ENCODE measurements at regions of chr6 and their contacts with region 1.

Region 1: DNA sequence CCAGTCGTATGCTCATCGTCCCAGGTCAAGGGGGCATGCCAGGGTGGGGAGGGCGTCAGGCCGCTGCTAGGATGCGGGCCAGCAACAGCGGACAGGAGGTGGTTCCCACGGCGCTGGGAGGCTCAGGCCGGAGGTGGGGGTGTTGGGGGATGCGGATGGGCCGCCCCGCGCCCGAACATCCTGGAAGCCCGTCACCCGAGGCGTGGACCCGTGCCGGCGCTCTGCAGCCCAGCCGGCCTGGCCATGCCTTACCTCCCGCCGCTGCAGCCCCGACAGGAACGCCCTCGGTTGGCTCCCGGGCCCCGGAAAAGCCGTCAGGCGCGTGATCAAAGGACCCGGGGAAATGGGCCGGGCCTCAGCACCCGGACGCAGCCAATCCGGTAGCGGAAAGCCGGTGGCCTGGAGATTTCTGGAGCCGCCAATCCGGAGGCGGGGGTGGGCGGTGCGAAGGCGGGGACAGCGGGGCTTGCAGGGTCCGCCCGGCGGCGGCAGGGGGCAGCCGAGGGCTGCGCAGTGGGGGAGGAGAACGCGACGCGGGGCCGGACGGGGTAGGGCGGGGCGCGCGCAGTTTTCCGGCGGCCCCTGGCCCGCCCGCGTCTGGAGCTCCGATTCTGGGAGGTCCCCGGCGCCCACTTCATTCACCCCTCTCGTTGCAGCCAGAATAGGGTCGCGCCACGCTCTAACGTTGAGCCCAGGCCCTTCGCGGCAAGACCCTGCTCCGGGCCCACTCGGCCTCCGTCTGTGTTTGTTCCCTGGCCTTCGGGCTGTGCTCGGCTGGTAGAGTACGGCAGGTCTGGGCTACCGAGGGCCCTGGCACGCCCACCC is at the start of gene SMIM29:
- DNase-seq: peak; percentile 99
- total RNA-seq, gene SMIM29: 27.1 TPM

Region 2: DNA sequence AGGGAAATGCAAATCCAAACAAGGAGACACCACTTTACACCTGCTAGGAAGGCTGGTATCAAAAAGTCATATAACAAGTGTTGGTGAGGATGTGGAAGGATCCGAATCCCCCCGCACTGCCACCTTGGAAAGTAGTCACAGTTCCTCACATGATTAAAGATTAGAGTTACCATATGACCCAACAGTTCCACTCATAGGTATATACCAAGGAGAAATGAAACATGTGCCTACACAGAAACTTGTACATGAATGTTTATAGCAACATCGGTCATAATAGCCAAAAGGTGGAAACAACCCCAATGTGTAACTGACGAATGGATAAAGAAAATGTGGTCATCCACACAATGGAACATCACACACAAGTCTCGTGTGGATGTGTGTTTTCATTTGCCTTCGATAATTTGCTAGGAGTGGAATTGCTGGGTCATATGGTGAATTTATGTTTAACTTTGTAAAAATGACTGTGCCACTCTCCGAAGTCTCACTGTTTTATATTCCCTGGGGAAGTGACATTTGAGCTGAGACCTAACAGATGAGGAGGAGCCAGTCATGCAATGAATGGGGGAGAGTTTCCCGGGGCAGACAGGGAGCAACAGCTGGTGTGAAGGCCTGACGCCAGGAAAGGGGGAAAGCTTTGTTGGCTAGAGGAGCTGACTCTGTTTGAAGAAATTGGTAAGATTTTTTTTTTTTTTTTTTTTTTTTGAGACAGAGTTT is 319.2 kb before region 1 on chr6:
- intact Hi-C with region 1: no loop called
- DNase-seq: no peak

Region 3: DNA sequence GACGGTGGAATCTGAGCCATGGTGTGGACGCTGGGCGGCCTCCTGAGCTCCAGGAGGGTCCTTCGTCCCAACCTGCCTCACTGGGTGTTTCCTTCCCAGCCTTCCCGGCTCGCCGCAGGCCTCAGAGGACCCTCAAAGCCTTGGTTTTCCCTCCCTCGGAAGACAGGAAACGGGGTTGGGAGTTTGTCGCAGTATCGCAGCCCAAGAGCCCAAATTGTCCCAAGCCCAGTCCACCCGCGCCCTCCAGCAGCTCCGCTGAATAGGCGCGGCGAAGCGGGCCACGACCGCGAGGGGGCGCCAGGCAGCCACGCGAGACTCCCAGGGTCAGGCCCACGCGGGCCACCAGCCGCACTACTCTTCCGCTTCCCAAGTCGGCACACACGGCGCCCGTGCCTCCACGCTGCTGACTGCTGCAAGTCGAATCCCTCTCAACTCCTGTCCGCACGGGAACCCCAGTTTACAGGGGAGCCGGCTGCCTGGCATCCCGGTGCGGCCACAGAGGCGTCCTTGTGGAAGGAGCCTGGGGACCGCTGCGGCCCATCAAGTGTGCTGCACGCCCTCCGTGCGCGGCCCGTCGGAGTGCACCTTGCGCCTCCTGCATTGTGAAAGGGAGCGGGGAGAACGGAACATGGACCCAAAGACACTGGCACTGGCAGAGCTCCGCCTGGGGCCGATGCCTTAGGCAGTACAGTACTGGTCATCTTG is 52.7 kb before region 1 on chr6:
- intact Hi-C with region 1: loop called (anchors 5 kb)
- DNase-seq: peak; percentile 95

Region 4: DNA sequence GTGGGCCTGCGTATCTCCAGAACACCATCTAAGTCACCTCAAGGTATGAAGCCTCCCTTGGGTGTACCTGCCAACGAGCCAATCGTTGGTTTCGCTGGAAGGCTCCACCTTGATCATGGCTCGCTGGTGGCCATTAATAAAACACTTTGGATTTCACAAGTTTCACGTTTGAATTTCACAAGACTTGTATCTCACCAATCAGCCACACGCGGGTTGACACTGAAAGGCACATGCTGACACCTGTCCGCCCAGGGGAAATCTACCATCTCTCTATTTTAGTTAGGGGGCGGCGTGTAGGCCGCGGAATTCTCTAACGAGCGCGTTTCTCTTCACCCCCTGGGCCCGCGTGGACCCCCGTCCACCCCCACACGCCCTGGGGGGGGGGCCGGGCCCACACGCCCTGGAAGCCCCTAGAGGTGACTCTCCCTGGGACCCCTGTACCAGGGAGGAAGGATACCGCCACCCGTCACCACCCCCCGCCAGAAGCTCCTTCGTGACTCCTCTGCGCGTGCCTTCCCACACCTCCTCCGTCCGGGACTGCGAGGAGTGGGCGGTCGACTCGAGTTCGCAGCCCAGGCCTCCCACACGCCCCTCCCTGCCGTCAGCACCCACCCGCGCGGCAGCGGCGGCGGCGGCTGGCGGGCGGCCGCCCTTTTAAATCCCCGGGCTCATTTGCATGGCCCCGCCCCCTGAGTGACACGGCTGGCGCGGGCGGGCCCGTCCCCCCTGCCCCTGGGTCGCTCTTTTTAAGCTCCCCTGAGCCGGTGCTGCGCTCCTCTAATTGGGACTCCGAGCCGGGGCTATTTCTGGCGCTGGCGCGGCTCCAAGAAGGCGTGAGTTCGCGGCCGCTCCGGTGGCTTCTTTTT is 12.6 kb before region 1 on chr6 and contains the start of gene HMGA1:
- intact Hi-C with region 1: no loop called
- DNase-seq: peak; percentile 95
- total RNA-seq, gene HMGA1: 36.4 TPM

Measured in cardiac septum (tissue), 1 donor.